PC-9 (cell line): ENCODE measurements at regions of chr2 and their contacts with region 1.

Region 1: DNA sequence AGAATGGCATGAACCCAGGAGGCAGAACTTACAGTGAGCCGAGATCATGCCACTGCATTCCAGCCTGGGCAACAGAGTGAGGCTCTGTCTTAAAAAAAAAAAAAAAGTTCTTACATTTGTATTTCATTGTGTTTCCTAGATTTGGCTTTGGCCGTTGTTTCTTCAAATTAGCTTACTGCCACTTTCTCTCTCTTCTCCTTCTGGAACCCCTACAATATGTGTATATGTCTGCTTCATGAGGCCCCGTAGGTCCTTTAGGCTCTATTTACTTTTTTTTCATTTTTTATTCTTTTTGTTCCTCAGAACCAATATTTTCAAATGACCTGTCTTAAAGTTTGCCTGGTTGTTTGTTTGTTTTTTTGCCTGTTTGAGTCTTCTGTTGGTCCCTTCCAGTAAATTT is 41.2 kb downstream of the RMDN2 start:
- DNase-seq: no peak
- H3K4me3 ChIP-seq: no peak overlapping the region
- H3K27ac ChIP-seq: no peak overlapping the region
- H3K4me1 ChIP-seq: peaks cover 11% of the 10 kb centered on the region; the same call in 1 of the 2 replicates
- H3K27me3 ChIP-seq: no peaks in the 10 kb centered on the region
- CTCF ChIP-seq: no peak

Region 2: GRCh38 chr2:37890893-37891495 is 75.3 kb before region 1 on chr2:
- CTCF ChIA-PET with region 1: interaction called, 3 read pairs
- POLR2A ChIA-PET with region 1: no interaction called
- intact Hi-C with region 1: loop called (anchors 10 kb)
- DNase-seq: peak; percentile 62 to 65
- H3K4me3 ChIP-seq: no peak overlapping the region
- H3K27ac ChIP-seq: no peak overlapping the region
- H3K4me1 ChIP-seq: no peaks in the 10 kb centered on the region
- H3K27me3 ChIP-seq: no peaks in the 10 kb centered on the region
- CTCF ChIP-seq: peak; percentile 90